ENCODE measurements at regions of chr17 and their contacts with region 1.

Region 1: DNA sequence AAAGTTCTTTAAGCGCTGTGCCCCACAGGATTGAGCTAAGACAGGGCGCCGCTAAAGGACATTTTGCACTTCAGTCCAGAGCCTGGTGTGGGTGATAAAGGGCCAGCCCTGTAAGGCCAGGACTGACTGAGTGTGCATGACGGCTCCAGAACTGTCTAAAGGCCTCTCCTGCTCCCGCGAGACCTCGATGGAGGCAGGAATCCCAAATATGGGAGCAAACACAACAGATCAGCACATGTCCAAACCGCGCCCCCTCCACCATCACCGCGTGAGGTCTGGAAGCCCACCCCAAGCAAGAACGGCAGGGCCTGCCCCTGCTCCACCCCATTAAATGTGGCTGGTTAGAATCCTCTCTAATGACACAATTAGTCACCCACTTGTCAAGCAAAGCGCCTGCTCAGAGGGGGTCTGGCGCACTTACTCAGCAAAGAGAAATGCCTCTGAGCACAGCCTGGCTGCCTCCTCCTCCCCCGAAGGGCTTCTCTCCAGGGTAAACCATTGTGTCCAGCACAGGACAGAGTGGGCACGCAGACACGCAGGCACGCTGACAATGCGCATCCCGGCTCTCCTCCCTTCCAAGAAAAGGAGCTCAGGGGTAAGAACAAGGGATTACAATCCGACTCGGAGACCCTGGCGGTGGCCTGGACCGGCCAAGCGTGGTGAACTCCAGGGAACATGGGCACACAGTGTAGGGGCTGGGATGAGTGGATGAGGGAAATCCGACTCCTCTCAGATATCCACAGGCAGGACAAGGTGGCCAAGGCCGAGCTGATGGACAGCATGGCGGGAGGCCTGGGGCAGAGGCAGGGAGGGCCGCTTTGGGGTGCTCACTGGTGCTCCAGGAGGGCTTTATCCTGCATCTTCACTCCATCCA is 1.5 kb downstream of the MXRA7 start:
- DNase-seq: peak in 1 of 2 experiments; percentile 56
- H3K4me3 ChIP-seq: peak overlapping the region; percentile 28 to 67 (median 54); a peak in 7 of 8 replicates
- H3K27ac ChIP-seq: no peak overlapping the region
- H3K4me1 ChIP-seq: peaks cover 11 to 28% (median 19%) of the 10 kb centered on the region in 4 experiments
- H3K27me3 ChIP-seq: peaks cover 2 to 22% (median 20%) of the 10 kb centered on the region in 4 experiments
- CTCF ChIP-seq: no peak
- EP300 ChIP-seq: no peak
- POLR2A ChIP-seq: no peak
- RAD21 ChIP-seq: no peak

Region 2: DNA sequence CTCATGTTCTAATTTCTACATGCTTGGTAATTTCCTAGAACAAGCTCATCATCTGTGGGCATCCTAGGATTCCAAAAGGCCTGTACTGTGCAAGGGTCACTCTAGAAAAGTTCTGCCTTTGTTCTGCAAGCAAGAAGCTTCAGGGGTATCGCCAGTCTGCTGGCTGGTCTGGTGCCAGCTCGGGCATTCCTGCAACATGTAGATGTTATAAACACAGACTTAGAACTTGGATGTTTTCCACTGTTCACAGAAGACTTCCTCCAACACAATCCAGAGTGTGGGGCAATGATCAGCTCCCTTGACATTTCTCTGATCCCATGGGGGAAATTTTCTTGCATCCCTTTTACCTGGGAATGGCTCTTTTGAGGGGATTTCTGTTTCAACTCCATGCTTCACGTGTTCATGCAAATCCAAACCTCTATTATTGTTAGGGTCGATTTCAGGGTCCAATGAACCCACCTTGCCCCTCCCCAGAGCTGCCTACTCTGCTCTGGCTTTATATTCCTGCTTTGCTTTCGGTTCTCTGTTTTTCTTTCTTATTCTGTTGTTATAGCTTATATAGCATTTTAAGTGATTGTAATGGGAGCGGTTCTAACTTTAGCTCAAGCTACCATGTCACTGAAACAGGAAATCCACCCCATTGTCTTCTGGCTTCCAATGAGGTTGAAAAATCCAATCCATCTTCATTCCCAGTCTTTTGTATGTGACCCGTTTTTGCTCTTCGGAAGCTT is 281.6 kb before region 1 on chr17:
- CTCF ChIA-PET with region 1: no interaction called
- POLR2A ChIA-PET with region 1: no interaction called
- DNase-seq: no peak
- H3K4me3 ChIP-seq: no peak overlapping the region
- H3K27ac ChIP-seq: no peak overlapping the region
- H3K4me1 ChIP-seq: peaks cover 0 to 22% (median 6%) of the 10 kb centered on the region in 4 experiments; a peak in 6 of 7 replicates
- H3K27me3 ChIP-seq: no peaks in the 10 kb centered on the region
- CTCF ChIP-seq: no peak
- EP300 ChIP-seq: no peak
- POLR2A ChIP-seq: no peak
- RAD21 ChIP-seq: no peak

Region 3: GRCh38 chr17:76501018-76501826 is 208.1 kb before region 1 on chr17 and contains the start of gene RHBDF2:
- CTCF ChIA-PET with region 1: no interaction called
- POLR2A ChIA-PET with region 1: no interaction called
- DNase-seq: peak; percentile 65 to 100
- H3K4me3 ChIP-seq: peak within 1 kb of the TSS; percentile 62 to 82 (median 76)
- H3K27ac ChIP-seq: no peak within 1 kb of the TSS
- H3K4me1 ChIP-seq: peaks cover 11 to 43% (median 34%) of the 10 kb centered on the region in 4 experiments
- H3K27me3 ChIP-seq: no peaks in the 10 kb centered on the region
- CTCF ChIP-seq: no peak
- EP300 ChIP-seq: no peak
- POLR2A ChIP-seq: peak in 1 of 2 experiments; percentile 71; a peak in 2 of 3 replicates
- RAD21 ChIP-seq: no peak
- total RNA-seq, gene RHBDF2: 25.9 and 26.2 TPM in 2 replicates

Region 4: DNA sequence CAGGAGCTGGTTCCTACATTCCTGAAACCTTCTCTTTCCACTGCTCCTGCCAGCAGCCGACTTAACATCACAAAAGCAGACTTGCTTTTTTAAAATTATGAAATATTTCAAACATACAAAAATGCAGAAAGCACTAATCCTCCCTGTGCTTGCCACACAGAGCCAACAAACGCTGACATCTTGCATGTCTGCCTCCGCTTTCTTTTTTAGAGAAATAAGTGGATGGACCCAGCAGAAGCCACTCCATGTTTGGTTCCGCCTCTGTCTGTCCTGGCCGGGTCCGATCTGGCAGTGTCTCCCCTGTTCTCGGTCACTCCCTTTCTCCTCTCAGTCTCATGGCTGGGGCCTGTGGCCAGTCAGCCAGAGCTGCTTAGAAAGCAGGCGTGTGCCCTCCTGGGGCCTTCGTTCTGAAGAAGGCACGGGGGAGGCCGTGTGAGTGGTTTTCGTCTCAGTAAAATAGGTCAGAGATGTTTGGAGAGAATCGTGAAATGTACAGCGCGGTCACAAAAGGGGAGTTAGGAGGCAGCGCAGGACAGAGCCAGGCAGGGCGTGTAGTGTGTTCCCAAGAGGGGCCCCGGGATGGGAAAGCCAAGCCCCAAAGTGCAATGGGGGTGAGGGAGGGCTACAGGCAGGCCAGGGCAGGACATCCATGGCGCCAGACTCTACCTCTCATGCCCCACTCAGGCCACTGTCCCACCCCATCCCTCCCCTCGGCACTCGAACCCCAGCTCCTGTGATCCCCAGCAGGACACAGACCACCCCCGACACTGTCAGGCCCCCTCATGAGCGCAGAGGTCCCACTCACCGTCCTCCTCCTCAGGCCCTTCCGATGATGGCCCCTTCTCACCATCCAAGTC is 21.8 kb before region 1 on chr17:
- CTCF ChIA-PET with region 1: interaction called, 155 read pairs
- POLR2A ChIA-PET with region 1: interaction called, 12 read pairs
- DNase-seq: no peak
- H3K4me3 ChIP-seq: no peak overlapping the region
- H3K27ac ChIP-seq: no peak overlapping the region
- H3K4me1 ChIP-seq: peaks cover 0 to 24% (median 12%) of the 10 kb centered on the region in 4 experiments; a peak in 6 of 7 replicates
- H3K27me3 ChIP-seq: no peaks in the 10 kb centered on the region; a peak in 1 of 7 replicates
- CTCF ChIP-seq: no peak
- EP300 ChIP-seq: no peak
- POLR2A ChIP-seq: no peak
- RAD21 ChIP-seq: no peak

Region 5: DNA sequence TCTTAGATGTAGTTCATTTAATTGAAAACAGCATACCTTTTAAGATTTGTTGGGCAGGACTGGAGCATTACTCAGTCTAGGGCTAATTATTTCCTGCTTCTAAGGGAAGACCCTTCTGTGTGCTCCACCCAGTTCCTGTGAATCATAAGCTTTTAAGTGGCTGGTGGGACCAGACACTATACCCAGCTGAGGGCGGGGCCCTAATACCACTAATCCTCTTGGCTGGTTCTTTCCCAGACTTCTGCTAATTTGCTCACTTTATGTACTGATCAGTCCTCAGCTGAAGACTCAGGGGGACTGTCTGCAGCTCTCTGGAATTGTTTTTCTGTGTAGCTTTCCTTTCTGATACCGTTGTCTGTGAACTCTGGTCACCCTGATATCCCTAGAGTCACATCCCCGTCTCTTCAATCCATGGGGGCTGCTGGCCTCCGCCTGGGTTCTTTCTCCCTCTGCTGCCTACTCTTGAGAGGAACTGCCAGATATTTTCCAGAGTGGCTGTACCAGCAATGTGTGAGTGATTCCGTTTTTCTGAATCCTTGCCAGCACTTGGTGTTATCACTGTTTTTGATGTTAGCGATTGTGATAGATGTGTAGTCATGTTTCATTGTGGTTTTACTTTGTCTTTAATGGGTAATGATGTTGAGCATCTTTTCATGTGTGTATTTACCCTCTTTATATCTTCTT is 63.7 kb after region 1 on chr17:
- CTCF ChIA-PET with region 1: no interaction called
- POLR2A ChIA-PET with region 1: no interaction called
- DNase-seq: no peak
- H3K4me3 ChIP-seq: no peak overlapping the region
- H3K27ac ChIP-seq: no peak overlapping the region
- H3K4me1 ChIP-seq: no peaks in the 10 kb centered on the region
- H3K27me3 ChIP-seq: no peaks in the 10 kb centered on the region
- CTCF ChIP-seq: no peak
- EP300 ChIP-seq: no peak
- POLR2A ChIP-seq: no peak
- RAD21 ChIP-seq: no peak

Measured in H1 (cell line).